Caki2 (cell line): ENCODE measurements at regions of chr12 and their contacts with region 1.

Region 1: DNA sequence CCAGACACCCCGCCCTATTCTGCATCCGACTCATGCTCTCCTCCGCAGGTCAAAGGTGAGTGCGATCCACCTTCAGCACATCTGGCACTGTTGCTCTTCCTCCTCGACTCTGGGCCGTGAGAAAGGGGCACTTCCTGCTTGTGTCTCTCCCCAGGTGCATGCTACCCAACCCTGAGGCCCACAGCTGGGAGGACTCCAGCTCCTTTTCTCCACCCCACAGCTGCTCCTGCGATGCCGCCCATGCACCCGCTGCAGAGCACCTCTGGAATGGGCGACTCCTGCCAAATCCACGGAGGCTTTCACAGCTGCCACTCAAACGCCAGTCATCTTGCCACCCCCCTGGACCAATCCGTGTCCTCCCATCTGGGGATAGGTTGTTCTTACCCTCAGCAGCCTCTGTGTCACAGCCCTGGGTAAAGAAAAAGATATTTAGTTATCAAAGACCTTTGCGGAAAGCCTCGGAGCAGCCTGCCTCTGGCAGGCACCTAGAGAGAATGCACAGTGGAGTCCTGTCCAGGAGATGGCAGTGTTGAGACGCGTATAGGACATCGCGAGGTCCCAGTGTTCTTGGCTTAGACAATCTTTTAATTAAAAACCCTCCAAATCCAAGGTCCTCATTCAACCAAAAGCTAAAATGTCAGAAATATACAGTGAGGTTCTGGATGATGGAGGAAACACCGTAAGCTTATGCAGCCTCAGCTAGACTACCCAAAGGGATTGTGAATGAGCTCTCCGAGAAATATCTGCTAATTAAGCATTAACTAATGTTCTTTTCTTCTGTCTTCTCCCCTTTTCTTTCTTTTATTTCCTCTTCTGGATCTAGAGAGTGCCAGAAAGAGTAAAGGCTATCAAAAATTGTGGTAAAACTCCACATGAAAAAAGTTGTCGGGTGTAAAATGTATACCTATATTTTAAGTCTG is 54.3 kb downstream of the MYRFL start:
- DNase-seq: peak; percentile 62

Region 2: GRCh38 chr12:69837191-69837590 is 42.1 kb before region 1 on chr12:
- in situ Hi-C with region 1: no loop called
- DNase-seq: no peak

Region 3: GRCh38 chr12:70011353-70011752 is 132.1 kb after region 1 on chr12:
- in situ Hi-C with region 1: no loop called
- DNase-seq: no peak

Region 4: DNA sequence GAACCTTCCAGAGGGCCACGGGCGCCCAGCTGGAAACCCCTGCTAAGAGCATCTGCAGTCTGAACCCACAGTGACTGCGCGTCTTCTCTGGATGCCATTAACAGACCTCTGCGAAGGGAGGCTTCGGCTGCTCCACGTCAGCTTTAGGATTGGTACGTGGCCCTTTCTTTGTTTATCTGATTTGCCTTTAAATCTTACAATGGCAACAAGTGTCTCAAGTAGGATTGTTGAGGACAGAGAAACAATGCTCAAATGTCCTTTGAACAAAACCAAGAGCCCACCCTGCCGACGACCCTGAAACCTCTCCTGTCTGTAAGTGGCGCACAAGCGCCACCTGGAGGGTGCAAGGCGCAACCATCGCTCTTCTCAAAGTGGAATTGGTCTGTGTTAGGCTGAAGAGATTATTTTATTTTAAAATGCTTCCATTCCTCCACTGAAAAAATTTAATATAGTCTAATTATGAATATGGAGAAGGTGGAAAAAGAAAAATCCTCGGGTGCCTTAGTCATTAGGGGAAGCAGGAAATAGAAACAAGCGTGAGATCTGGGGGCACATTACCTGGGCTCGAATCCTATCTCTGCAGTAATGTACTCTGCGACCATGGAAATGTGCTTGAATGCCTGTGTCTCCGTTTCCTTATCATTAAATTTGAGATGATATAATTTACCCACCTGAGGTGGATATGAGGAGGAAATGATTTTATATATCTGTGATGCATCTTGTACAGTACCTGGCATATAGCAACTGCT is 840.5 kb after region 1 on chr12:
- in situ Hi-C with region 1: loop called (anchors 25 kb)
- DNase-seq: peak; percentile 53